ENCODE measurements at regions of chr11 and their contacts with region 1.

Region 1: DNA sequence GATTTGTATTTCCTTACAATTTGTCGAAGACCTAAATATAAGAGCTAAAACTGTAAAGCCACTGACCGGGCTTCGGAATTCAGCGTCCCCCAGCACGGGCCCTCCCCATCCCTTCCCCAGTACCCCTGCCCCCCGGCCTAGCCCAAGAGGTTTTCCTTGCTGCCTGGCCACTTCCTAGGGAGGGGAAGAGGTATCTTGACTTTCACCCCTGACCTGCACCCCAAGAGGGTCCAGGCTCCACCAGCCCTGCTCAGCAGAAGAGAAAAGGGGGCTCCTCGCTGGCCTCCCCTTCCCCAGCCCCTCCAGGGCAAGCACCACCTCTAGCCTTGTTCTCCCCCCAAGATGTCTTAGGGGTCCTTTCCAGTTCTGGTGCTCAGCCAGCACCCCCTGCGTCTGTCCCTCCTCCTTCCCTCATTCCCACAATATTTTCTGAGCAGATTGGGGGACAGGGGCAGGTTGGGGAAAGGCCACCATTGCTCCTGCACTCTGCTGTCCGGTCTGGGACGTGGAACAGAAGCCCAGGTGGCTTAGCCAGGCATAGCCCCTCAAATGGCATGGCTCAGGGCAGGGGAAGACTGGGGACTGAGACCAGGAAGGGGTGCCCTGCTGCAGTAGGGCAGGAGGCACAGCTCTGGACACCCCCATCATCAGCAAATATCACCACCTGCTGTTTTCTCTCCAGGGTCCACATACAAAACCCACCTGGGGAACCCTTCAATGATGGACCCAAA is 26.3 kb upstream of the CARS1 start:
- DNase-seq: no peak
- ATAC-seq: no peak
- H3K4me3 ChIP-seq: no peak overlapping the region
- H3K27ac ChIP-seq: no peak overlapping the region
- H3K4me1 ChIP-seq: no peaks in the 10 kb centered on the region
- H3K27me3 ChIP-seq: peaks cover 0 to 3% (median 0%) of the 10 kb centered on the region in 9 donors
- CTCF ChIP-seq: no peak
- POLR2A ChIP-seq: no peak

Region 2: DNA sequence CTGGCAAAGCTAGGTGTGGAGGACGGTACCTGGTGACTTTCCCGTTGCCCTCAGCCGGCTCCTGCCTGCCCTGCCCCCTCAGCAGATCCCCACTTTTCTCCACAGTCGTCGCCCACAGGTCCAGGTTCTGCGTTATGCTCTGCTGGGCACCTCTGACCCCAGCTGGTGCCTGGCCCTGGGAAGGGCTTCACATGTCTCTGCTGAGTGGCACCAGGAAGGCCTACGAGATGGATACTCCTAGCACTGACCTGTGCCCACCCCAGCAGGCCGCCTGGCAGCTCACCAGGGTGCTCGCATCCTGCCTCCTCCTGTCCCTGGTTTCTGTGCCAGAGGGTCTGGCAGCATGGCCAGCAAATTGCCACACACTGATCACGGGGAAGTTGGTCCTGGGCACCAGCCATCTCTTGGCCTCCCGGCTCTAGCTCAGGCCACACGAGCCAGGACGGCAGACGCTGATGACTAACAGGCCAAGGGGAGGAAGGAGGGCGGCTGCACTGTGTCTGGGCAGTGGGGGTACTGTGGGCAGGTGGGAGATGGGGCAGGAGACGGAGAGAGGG is 40.1 kb before region 1 on chr11:
- intact Hi-C with region 1: loop called in 1 of 10 experiments (anchors 2 kb)
- DNase-seq: peak; percentile 51 to 88 (median 85)
- ATAC-seq: peak; percentile 70 to 85 (median 82)
- H3K4me3 ChIP-seq: no peak overlapping the region
- H3K27ac ChIP-seq: peak overlapping the region in 11 of 12 donors; percentile 41 to 81 (median 65)
- H3K4me1 ChIP-seq: peaks cover 0 to 32% (median 24%) of the 10 kb centered on the region in 12 donors
- H3K27me3 ChIP-seq: no peaks in the 10 kb centered on the region
- CTCF ChIP-seq: no peak
- POLR2A ChIP-seq: no peak

Measured in heart left ventricle (tissue), 16 donors.